Activated T-helper 2 cell treated with anti-CD3 and anti-CD28 coated beads, Interferon-gamma antibody, Interleukin-2, Interleukin-4, amounts not matched to agents 10 μg/mL and 5 μg/mL and 100 μg/mL, durations not matched to agents 14 hours and 24 hours and 36 hours (primary cell): ENCODE measurements at regions of chr18 and their contacts with region 1.

Region 1: GRCh38 chr18:13558124-13558523 is 168.2 kb downstream of the FAM210A start:
- DNase-seq: no peak
- H3K4me3 Mint-ChIP-seq: no peak overlapping the region
- H3K27ac Mint-ChIP-seq: no peak overlapping the region
- H3K4me1 Mint-ChIP-seq: peaks cover 28% of the 10 kb centered on the region
- H3K27me3 Mint-ChIP-seq: no peaks in the 10 kb centered on the region

Region 2: GRCh38 chr18:13435596-13436327 is 122.4 kb before region 1 on chr18:
- intact Hi-C with region 1: loop called (anchors 2 kb)
- DNase-seq: no peak
- H3K4me3 Mint-ChIP-seq: no peak overlapping the region
- H3K27ac Mint-ChIP-seq: peak overlapping the region; percentile 54
- H3K4me1 Mint-ChIP-seq: peaks cover 56% of the 10 kb centered on the region
- H3K27me3 Mint-ChIP-seq: no peaks in the 10 kb centered on the region

Region 3: GRCh38 chr18:13500227-13500865 is 57.8 kb before region 1 on chr18:
- intact Hi-C with region 1: no loop called
- DNase-seq: no peak
- H3K4me3 Mint-ChIP-seq: no peak overlapping the region
- H3K27ac Mint-ChIP-seq: no peak overlapping the region
- H3K4me1 Mint-ChIP-seq: peaks cover 16% of the 10 kb centered on the region
- H3K27me3 Mint-ChIP-seq: no peaks in the 10 kb centered on the region

Region 4: GRCh38 chr18:13585379-13586153 is 27.4 kb after region 1 on chr18:
- intact Hi-C with region 1: loop called (anchors 1 kb)
- DNase-seq: no peak
- H3K4me3 Mint-ChIP-seq: no peak overlapping the region
- H3K27ac Mint-ChIP-seq: peak overlapping the region; percentile 5
- H3K4me1 Mint-ChIP-seq: peaks cover 52% of the 10 kb centered on the region
- H3K27me3 Mint-ChIP-seq: no peaks in the 10 kb centered on the region

Region 5: GRCh38 chr18:13629841-13630715 is 72.0 kb after region 1 on chr18:
- intact Hi-C with region 1: loop called (anchors 1 kb)
- DNase-seq: no peak
- H3K4me3 Mint-ChIP-seq: no peak overlapping the region
- H3K27ac Mint-ChIP-seq: no peak overlapping the region
- H3K4me1 Mint-ChIP-seq: peaks cover 16% of the 10 kb centered on the region
- H3K27me3 Mint-ChIP-seq: no peaks in the 10 kb centered on the region

Region 6: DNA sequence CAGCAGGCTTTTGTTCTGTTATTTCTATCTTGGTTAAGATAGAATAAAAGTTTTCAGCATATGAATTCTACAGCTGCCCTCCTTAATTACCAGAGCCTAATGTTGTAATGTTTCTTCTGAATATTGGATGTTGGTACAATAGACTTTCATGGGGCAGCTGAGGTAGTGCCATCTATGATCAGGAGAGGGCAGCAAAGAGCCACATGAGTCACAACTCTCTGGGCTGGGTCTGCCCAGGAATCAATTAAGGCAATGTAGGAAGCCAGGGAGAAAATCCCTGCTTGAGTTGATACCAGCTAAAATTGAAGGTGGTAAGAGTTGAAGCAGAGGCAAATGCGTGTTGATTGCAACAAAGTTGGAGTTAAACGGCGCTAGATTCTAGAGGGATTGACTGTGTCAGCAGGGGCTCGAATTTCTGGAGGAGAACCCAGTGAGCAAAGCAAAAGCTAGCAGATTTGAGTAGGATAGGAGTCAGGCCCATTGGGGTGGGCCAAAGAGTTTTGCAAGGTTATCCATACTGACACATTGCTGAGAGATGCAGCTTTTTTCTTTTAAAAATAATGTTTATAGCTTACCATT is 255.2 kb after region 1 on chr18:
- intact Hi-C with region 1: loop called (anchors 5 kb)
- DNase-seq: peak; percentile 28
- H3K4me3 Mint-ChIP-seq: no peak overlapping the region
- H3K27ac Mint-ChIP-seq: no peak overlapping the region
- H3K4me1 Mint-ChIP-seq: peaks cover 2% of the 10 kb centered on the region
- H3K27me3 Mint-ChIP-seq: peaks cover 16% of the 10 kb centered on the region